Transverse colon (tissue), 4 donors: ENCODE measurements at regions of chr5 and their contacts with region 1.

Region 1: GRCh38 chr5:139633295-139634027 is 14.7 kb upstream of the CXXC5 start:
- DNase-seq: peak; percentile 77
- H3K4me3 ChIP-seq: no peak overlapping the region
- H3K27ac ChIP-seq: no peak overlapping the region
- H3K4me1 ChIP-seq: peaks cover 22 to 39% (median 34%) of the 10 kb centered on the region in 4 donors
- H3K27me3 ChIP-seq: no peaks in the 10 kb centered on the region
- CTCF ChIP-seq: peak; percentile 96 to 99 (median 96)
- EP300 ChIP-seq: no peak
- POLR2A ChIP-seq: no peak

Region 2: DNA sequence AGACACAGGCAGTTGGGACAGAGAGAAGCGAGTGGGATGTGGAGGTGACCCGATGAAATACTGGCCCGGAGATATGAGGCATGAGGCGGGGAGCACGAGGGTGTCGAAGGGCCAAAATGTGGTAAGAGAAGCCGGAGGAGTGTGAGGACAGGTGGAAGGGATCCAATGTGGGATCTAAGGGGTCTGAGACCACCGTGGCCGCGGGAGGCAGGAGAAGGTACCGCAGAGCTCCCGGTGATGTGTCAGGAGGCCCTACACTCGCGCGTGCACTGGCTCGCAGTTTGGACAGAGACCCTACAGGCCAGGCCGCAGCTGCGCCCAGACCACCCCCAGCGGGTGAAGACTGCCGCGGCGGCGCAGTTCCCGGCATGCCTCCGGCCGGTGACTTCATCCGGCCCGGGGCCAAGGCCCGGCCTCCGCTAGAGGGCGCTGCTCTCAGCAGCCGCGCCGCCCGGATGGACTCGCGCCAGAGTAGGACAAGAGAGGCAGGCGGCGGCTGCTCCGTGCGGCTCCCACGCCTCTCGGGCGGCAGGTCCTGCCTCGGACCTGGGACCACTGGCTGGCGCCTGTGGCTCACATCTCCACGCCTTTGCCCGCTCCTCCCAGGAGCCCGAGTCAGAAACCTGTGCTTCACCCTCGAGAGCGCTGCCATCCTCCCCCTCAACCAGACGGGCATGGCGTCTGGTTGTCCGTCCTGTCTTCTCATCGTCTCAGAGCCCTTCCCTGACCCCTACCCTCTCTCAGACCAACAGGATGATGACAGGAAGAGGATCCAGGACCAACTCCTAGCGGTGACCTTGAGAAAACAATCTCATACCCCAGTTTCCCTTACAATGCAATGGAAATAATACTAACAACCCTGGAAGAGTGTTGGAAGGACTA is 115.5 kb before region 1 on chr5:
- in situ Hi-C with region 1: no loop called
- intact Hi-C with region 1: no loop called
- DNase-seq: peak; percentile 93
- H3K4me3 ChIP-seq: peak overlapping the region; percentile 34 to 56 (median 49)
- H3K27ac ChIP-seq: peak overlapping the region; percentile 72 to 86 (median 85)
- H3K4me1 ChIP-seq: peaks cover 0 to 9% (median 8%) of the 10 kb centered on the region in 4 donors
- H3K27me3 ChIP-seq: no peaks in the 10 kb centered on the region
- CTCF ChIP-seq: peak; percentile 93 to 99 (median 98)
- EP300 ChIP-seq: no peak
- POLR2A ChIP-seq: peak; percentile 74

Region 3: DNA sequence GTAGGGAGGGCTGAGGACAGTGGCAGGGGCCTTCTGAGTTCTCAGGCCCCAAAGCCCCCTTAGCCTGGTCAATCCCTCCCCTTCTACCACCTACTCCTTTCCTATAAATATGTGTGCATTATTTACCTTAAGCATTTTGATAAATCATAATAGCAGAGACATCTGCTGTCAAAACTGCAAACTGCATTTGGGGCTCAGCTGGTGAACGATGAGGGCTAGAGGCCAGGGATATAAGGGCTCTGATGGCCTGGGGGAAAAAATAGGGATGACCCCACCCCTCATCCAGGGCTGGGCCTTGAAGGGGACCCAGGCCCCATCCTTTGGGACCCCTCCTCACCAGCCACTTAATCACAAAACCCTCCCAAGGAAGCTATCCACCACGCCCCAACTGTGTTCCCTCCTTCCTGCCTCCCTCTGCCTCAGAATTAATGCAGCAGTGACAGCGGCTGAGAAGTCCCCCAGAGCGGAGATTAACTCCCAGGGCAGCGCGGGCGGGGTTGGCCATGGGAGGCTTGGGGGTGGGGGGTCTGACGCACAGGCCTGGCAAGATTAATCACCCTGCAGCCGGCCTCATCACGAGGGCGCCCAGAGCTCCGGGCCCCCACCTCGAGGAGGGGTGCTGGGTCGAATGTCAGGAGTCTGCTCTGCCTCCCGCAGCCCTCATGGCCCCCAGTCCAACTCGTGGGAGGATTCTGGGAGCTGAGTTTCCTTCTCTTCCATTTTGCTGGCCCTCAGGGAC is 56.8 kb after region 1 on chr5:
- in situ Hi-C with region 1: loop called in 1 of 4 experiments (anchors 10 kb)
- intact Hi-C with region 1: loop called (anchors 2 kb)
- DNase-seq: peak; percentile 31
- H3K4me3 ChIP-seq: no peak overlapping the region
- H3K27ac ChIP-seq: peak overlapping the region in 2 of 4 donors; percentile 11 to 29
- H3K4me1 ChIP-seq: peaks cover 7 to 17% (median 15%) of the 10 kb centered on the region in 4 donors
- H3K27me3 ChIP-seq: no peaks in the 10 kb centered on the region
- CTCF ChIP-seq: peak; percentile 48 to 76 (median 65)
- EP300 ChIP-seq: no peak
- POLR2A ChIP-seq: no peak

Region 4: DNA sequence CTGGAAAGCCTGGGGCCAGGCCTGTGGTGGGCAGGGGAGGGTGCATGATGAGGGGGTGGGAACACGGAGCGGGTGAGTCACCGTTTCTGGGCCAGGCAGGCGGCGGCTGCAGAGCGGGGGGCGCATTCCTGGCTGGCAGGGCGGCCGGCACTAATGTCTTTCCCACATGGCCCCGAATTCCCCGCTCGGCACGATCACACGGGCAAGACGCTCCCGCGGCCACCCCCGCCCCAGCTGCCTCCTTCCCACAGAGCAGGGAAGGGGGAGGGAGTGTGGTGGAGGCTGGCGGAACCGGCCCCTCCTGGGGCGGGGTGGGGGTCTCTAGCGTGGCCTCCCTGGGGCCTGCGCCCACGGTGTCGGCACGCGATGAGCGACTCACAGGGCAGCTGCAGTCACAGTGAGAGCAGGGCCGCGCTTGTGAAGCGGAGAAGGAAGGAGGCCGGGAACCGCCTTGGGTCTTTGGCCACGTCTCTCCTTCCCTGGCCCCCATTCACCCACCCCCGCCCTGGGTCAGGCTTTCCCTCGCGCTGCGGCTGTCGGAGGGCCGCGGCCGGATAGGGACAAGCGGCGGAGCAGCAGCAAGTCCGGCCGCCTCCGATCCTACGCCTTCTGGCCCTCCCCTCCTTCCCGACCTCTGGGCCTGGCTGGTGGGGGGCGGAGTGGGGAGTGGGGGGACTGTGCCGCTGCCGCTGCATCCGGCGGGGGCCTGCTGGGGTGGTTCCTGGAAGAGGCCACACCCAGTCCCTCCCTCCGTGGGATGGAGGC is 63.6 kb after region 1 on chr5:
- in situ Hi-C with region 1: loop called in 1 of 4 experiments (anchors 10 kb)
- intact Hi-C with region 1: no loop called
- DNase-seq: peak; percentile 59
- H3K4me3 ChIP-seq: peak overlapping the region; percentile 19 to 46 (median 33)
- H3K27ac ChIP-seq: peak overlapping the region; percentile 80 to 84 (median 81)
- H3K4me1 ChIP-seq: peaks cover 25 to 38% (median 29%) of the 10 kb centered on the region in 4 donors
- H3K27me3 ChIP-seq: peaks cover 22% of the 10 kb centered on the region
- CTCF ChIP-seq: no peak
- EP300 ChIP-seq: no peak
- POLR2A ChIP-seq: no peak

Region 5: DNA sequence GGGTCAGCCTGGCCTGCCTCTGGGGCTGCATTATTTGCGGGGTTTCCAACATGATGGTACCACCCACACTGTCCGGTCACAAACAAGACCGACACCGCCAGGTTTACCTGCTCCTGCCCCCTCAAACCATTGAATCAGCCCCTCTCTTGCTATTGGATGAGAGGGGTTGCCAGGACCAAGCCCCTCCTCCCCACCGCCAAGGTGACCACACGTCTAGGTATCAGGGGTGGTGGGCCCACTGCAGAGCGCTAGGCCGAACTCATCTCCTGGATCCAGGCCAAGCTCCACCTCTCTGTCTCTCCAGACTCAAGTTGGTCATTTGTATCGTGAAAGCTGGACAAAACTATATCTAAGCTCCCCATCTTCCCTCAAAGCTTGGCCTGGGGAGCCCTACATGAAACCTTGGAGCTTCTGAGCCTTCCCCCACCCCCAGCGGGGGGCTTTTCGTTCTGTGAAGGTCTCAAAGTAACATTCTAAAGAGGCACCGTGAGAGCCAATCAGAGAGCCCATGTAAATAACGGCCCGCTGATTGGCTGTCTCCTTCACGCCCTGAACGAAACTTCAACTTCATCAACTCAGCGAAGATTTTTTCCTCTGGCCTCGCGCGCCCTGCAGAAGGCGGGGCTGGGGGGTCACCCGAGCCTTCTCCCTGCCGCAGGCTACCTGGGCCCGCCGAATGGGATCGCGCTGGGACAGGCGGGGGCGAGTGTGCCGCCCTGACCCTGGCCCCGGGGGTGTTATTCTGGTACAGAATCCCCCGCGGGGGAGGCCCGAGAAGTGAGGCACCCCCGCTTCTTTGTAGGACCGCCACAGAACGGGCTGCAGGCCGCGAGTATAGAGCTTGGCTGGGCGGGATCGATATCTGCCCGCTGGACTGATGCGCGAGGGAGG is 112.6 kb after region 1 on chr5:
- in situ Hi-C with region 1: loop called in 1 of 4 experiments (anchors 25 kb)
- intact Hi-C with region 1: loop called (anchors 5 kb)
- DNase-seq: peak; percentile 66
- H3K4me3 ChIP-seq: peak overlapping the region; percentile 0 to 42 (median 18)
- H3K27ac ChIP-seq: peak overlapping the region in 2 of 4 donors; percentile 2 to 10
- H3K4me1 ChIP-seq: peaks cover 21 to 33% (median 22%) of the 10 kb centered on the region in 4 donors
- H3K27me3 ChIP-seq: peaks cover 48% of the 10 kb centered on the region
- CTCF ChIP-seq: no peak
- EP300 ChIP-seq: no peak
- POLR2A ChIP-seq: no peak

Region 6: DNA sequence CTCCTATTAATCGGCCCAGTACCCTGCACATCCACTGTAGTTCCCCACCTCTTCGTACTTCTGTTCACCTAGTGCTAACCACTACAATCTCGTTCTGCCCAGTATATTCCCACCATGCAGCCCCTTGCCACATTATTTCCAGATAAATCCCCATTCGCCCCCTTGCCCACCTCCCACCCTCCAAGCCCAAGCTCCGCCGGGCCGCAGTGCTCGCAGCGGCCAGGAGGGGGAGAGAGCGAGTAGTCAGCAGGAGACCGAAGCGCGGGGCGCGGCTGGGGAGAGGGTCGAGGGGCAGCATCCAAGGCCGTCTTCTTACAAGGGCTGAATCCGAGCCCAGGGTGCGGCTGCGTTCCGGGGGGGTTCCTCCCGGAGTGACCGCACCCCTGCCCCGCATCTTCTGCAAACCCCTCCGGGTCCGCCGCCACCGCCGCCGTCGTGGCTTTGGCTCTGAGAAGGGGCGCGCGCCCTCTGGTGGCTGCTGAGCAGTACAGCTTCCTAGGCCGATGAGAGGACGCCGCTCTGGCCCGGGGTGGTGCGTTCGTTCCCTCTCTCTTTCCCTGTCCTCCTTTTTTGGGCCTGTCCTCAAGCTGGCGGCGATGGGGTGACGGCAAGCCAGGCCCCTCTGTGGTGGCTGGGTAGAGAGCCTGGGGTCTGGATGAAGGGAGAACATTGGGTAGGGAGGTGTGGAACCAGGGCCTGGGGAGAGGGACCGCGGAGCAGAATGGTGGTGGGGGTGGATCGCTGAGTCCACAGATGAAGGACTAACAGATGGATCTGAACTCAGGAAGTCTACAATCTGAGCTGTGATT is 132.2 kb after region 1 on chr5:
- in situ Hi-C with region 1: loop called (anchors 5 to 25 kb)
- intact Hi-C with region 1: loop called (anchors 1 kb)
- DNase-seq: peak; percentile 79
- H3K4me3 ChIP-seq: peak overlapping the region; percentile 40 to 63 (median 49)
- H3K27ac ChIP-seq: peak overlapping the region in 2 of 4 donors; percentile 40 to 42
- H3K4me1 ChIP-seq: peaks cover 0 to 15% (median 0%) of the 10 kb centered on the region in 4 donors
- H3K27me3 ChIP-seq: peaks cover 31% of the 10 kb centered on the region
- CTCF ChIP-seq: peak; percentile 95 to 100 (median 99)
- EP300 ChIP-seq: no peak
- POLR2A ChIP-seq: no peak